Activated T-helper 1 cell treated with anti-CD3 and anti-CD28 coated beads, Interleukin-12 subunit alpha, Interleukin-12 subunit beta, Interleukin-2, Interleukin-4 antibody, amounts not matched to agents 30 ng/mL and 10 ng/mL and 1 ng/mL, durations not matched to agents 14 hours and 24 hours and 36 hours (primary cell): ENCODE measurements at regions of chr7 and their contacts with region 1.

Region 1: DNA sequence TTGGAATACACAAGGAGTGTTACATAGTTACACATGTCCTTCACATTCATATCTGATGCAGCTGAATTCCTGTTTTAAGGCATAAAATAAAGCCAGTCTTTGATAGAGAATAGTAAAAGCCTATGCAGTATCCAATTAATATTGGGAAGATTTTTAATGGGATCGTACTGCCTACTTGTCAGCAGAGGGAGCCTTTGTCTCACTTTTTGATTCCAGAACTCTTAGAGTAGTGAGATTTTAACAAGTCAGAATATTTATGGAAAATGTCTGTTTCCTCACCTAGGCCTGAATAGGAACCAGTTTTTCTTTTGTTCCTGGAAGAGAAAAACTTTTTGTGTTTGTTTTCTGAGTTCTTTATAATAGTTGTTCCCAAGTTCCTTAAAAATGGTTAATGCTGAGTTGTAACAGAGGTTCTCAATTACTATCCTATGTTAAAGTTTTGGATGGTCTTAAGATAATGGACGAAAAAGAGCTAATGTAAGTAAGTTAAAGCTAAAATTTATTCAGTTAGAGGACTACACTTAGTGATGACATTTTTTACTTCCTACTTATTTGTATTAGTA is 114.0 kb downstream of the BBS9 start:
- DNase-seq: no peak
- H3K4me3 Mint-ChIP-seq: no peak overlapping the region
- H3K27ac Mint-ChIP-seq: no peak overlapping the region
- H3K4me1 Mint-ChIP-seq: no peaks in the 10 kb centered on the region
- H3K27me3 Mint-ChIP-seq: no peaks in the 10 kb centered on the region

Region 2: DNA sequence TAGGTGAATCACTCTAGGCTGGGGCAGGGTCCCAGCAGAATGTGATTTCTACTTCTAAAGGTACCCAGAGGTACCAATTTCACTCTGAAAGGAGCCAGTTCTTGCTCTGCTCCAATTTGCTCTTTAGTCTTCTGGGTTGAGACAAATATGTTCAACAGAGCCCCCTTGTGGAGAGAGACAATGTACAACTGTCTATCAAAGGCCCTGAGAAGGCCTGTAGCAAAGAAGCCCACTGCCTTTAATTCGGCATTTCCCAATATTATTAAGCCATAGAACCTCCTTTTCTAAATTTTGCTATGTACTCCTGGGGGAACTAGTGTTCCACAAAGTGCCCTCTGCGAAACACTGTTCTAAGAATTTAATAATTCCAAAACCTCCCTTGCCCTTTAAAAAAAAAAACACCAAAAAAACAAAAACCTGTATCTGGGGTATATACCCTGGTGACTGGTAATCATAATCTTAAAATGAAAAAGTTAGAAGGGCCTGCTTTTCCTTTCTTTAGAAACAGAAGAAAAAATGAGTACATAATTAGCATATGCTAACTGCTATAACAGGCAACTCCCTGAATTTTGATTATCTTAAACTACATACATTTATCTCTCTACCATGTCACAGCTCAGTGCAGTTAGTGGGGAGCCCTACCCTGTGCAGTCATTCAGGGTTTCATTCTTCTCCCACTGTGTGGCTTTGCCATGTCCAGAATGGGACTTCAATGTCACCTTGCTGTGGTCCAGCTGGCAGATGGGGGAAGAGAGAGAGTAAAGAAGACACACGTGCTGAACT is 501.1 kb after region 1 on chr7:
- intact Hi-C with region 1: loop called (anchors 10 kb)
- DNase-seq: no peak
- H3K4me3 Mint-ChIP-seq: no peak overlapping the region
- H3K27ac Mint-ChIP-seq: no peak overlapping the region
- H3K4me1 Mint-ChIP-seq: no peaks in the 10 kb centered on the region
- H3K27me3 Mint-ChIP-seq: no peaks in the 10 kb centered on the region

Region 3: GRCh38 chr7:33932832-33933468 is 689.5 kb after region 1 on chr7:
- intact Hi-C with region 1: loop called (anchors 5 kb)
- DNase-seq: peak; percentile 36
- H3K4me3 Mint-ChIP-seq: no peak overlapping the region
- H3K27ac Mint-ChIP-seq: no peak overlapping the region
- H3K4me1 Mint-ChIP-seq: no peaks in the 10 kb centered on the region
- H3K27me3 Mint-ChIP-seq: peaks cover 6% of the 10 kb centered on the region

Region 4: DNA sequence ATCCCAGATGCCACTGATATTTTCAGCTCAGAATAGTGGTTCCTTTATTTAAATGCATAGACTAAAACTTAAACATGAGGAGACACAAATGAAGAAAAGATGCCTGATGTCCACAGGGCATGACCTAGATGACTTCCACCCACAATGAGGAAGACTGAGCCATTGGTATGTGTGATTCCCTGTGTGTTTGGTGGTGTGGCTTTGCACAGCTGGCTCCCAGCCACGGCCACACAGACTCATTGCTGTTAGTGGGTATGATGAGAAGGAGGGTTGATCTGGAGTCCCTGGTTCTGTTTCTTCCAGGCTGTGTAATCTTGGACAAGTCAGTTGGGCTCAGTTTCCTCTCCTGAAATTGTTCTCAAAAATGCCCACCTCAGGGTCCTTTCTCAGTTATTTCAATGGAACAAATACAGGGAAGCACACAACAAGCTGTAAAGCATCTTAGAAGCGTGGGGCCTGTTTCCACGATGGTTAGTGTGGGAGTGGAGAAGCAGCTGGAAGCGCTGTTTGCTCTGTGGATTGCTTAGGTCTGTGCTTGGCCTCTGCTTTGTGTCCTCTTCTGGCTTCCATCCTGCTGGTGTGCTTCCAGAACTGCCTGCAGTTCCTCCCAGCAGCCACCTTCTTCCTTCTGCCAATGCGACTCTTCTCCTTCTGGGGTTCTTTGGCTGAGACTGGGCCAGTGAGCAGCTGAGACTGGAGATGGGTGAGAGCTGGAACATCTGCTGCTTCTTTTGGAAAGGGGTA is 965.6 kb after region 1 on chr7:
- intact Hi-C with region 1: no loop called
- DNase-seq: no peak
- H3K4me3 Mint-ChIP-seq: no peak overlapping the region
- H3K27ac Mint-ChIP-seq: no peak overlapping the region
- H3K4me1 Mint-ChIP-seq: no peaks in the 10 kb centered on the region
- H3K27me3 Mint-ChIP-seq: peaks cover 2% of the 10 kb centered on the region